OCI-LY7 (cell line): ENCODE measurements at regions of chr9 and their contacts with region 1.

Region 1: DNA sequence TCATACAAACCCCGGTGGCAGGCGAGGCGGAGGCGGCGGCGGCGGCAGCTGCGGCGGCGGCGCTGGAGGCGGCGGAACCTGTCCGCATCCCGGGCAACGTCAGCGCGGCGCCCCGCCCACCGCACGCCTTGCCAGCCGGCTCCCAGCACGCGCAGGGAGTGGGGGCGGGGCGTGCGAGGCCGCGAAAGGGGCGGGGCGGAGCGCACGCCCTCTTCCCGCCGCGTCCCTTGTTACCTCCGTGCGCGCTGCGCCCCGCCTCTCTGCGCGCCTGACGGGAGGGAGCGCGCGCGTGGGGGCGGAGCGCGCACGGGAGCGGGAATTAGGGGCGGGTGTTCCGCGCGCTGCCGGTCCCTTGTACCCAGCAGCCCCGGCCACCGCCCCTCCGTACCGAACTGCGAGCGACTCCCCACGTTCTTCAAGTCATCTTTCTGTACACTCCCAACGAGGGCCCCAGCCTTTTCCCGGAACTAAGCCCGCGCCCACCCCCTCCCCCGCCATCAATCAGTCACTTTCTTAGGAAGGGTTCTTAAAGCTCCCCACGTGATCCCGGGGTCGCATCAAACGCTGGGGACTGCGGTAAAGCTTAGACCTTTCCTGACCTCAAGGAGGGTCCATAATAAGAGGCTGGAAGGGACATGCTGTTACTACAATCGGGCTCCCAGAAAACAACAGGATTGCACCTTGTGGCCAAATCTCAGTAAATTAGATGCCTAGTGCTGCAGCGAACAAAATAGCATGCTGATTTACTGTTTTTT is at the start of gene AGTPBP1:
- DNase-seq: peak; percentile 97
- H3K4me3 ChIP-seq: peak within 1 kb of the TSS; percentile 92
- H3K27ac ChIP-seq: peak within 1 kb of the TSS; percentile 70
- H3K4me1 ChIP-seq: peaks cover 10% of the 10 kb centered on the region
- CTCF ChIP-seq: no peak
- total RNA-seq, gene AGTPBP1: 24.2 and 31.0 TPM in 2 replicates

Region 2: DNA sequence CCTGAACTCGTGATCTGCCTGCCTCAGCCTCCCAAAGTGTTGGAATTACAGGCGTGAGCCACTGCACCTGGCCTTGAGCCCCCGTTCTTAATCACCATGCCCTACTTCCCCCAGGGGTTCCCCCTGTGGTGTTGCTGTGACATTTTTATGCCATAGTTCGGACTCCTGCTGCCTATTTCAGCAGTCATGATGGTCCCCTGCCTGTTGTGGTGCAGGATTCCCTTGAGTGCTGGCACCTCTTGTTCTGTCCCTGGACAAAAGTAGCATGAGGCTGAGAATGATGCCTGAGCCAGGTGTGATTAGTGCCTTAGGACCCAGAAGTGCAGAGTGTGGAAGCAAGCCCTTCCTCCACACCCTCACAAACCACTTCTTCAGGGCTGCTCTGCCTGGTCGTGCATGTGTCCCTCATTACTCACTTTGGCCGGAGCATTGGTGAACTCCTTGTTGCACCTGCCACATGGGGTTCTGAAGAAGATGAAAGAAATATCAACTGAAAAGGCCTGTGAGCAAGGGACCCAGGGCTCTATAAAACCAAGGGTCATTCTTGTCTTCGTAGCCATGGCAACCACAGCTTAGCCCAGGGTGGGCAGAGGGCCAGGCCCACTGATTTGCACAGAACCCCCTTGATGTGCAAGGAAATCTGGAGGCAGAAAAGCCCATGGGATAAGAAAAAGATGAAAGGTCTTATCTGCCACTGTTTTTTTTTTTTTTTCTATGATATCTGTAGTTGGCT is 844.5 kb before region 1 on chr9:
- CTCF ChIA-PET with region 1: no interaction called
- POLR2A ChIA-PET with region 1: no interaction called
- intact Hi-C with region 1: no loop called
- DNase-seq: no peak
- H3K4me3 ChIP-seq: no peak overlapping the region
- H3K27ac ChIP-seq: no peak overlapping the region
- H3K4me1 ChIP-seq: no peaks in the 10 kb centered on the region
- CTCF ChIP-seq: no peak

Region 3: DNA sequence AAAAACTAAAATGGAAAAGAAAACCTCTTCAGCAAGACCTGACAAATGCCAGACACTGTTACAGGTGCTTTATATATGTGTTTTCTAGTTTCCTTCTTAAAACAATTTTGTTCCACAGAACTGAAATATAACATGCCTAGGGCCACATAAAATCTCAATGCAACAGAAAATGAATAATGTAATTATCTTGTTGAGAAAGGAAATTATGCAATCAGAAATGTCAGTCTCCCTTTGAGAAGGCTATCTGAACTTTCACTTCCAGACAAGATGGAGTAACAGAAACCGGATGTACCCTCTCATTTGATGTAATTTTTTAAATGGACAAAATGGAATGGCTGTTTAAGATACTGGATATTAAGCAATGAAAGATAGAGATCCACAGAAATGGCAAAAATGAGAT is 79.5 kb before region 1 on chr9:
- CTCF ChIA-PET with region 1: no interaction called
- POLR2A ChIA-PET with region 1: no interaction called
- intact Hi-C with region 1: no loop called
- DNase-seq: no peak
- H3K4me3 ChIP-seq: no peak overlapping the region
- H3K27ac ChIP-seq: no peak overlapping the region
- H3K4me1 ChIP-seq: no peaks in the 10 kb centered on the region
- CTCF ChIP-seq: no peak

Region 4: DNA sequence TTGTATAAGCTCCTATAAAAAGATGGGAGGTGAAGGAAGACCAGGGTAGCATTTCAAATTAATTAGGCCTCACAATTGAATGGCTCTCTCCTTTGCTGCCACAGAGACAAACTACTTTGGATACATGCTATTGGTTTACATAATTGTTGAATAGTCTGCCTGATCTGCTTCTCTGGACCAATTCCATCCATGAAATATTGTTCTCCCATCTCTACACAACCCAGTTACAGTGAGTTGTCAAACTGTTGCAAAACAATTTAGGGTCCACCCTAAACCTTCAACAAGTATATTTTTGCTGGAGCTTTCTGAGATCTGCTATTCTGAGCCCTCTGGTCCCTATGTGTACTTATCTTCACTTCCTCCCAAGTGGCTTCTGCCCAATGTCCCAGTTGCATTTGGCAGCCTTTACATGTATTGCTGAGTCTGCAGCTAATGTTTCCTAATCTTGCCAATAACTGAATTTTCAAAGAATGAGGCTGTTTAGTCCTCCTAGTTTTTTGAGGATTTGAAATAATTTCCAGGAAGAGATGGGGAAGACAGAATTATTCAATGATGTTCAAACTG is 39.2 kb before region 1 on chr9:
- CTCF ChIA-PET with region 1: interaction called, 15 read pairs
- POLR2A ChIA-PET with region 1: interaction called, 3 read pairs
- intact Hi-C with region 1: loop called (anchors 2 kb)
- DNase-seq: no peak
- H3K4me3 ChIP-seq: no peak overlapping the region
- H3K27ac ChIP-seq: no peak overlapping the region
- H3K4me1 ChIP-seq: peaks cover 9% of the 10 kb centered on the region
- CTCF ChIP-seq: no peak